ENCODE measurements at regions of chr13 and their contacts with region 1.

Region 1: DNA sequence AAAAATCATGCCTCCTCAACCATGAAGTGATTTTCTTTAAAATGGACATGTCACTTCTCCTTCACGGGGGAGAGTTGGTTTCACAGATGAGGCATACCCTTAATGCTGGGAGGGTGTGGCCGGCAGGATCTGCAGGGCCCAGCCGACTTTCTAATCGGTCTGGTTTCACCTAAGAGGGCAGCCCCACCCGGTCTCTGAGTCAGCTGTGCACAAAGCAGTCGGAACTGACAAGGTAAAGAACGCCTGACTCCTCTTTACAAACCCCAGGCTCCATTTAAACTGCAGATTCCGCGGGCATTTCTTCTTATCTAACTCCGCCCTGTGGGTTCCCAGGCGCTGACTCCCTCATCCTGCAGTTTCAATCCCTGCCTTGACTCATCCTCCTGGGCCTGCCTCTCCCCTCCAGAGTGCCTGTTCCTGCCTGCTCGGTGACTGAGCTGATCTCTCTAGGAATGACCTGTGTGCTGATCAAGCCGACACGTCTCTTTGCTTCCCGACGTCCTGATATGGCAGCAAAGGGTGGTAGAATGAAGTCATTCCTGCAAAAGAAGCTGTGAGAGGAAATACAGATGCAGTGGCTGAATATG is 63.4 kb downstream of the EFNB2 start:
- DNase-seq: peak; percentile 35 to 85
- H3K4me3 ChIP-seq: peak overlapping the region in 1 of 2 donors; percentile 32
- H3K27ac ChIP-seq: peak overlapping the region; percentile 47 to 64
- H3K4me1 ChIP-seq: peaks cover 0 to 9% of the 10 kb centered on the region in 2 donors
- H3K27me3 ChIP-seq: no peaks in the 10 kb centered on the region
- CTCF ChIP-seq: no peak

Region 2: GRCh38 chr13:106311004-106311403 is 161.0 kb before region 1 on chr13:
- intact Hi-C with region 1: no loop called
- DNase-seq: no peak
- H3K4me3 ChIP-seq: no peak overlapping the region
- H3K27ac ChIP-seq: no peak overlapping the region
- H3K4me1 ChIP-seq: no peaks in the 10 kb centered on the region
- H3K27me3 ChIP-seq: no peaks in the 10 kb centered on the region
- CTCF ChIP-seq: no peak

Region 3: GRCh38 chr13:106493533-106494220 is 21.6 kb after region 1 on chr13:
- intact Hi-C with region 1: loop called (anchors 2 kb)
- DNase-seq: no peak
- H3K4me3 ChIP-seq: peak overlapping the region in 1 of 2 donors; percentile 57
- H3K27ac ChIP-seq: peak overlapping the region; percentile 45 to 71
- H3K4me1 ChIP-seq: peaks cover 9 to 25% of the 10 kb centered on the region in 2 donors
- H3K27me3 ChIP-seq: no peaks in the 10 kb centered on the region
- CTCF ChIP-seq: no peak

Measured in ascending aorta (tissue), 2 donors.